ENCODE measurements at regions of chrX and their contacts with region 1.

Region 1: DNA sequence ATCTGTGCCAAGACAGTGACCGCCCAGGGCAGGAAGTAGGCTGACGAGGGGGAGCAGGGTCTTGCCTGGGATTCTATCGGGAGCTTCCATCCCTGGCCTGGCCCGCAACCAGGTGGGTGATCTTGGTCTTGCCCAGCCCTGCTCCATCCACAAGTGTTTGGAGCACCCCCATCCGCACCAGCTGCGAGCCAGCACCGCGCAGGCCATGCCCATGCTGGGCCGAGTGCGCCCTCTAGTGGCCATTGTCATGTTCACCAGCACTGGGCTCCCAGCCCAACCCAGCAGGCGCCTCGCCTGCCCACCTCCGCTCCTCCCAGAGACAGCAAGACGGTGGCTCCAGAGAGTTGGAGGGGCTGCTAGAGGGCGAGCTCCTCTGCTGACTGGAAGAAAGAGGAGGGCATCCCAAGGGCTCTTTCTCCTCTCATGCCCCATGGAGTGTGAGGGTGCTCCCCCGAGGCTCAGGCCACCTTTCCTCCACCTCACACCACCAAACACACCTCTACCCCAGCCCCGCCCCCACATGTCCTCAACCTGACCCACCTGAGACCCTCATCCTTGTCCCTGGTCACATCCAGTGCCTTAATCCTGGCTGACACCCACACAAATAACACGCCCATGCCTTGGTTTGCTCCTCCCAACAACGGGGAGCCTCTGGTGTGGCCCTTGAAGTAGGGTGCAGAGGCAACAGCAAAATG is 9.8 kb upstream of the ATP2B3 start:
- DNase-seq: peak; percentile 69 to 88
- ATAC-seq: peak; percentile 88 to 98
- H3K4me3 ChIP-seq: no peak overlapping the region
- H3K27ac ChIP-seq: peak overlapping the region in 1 of 2 experiments; percentile 48; a peak in 1 of 6 replicates
- H3K4me1 ChIP-seq: no peaks in the 10 kb centered on the region
- CTCF ChIP-seq: peak; percentile 84
- EP300 ChIP-seq: no peak
- POLR2A ChIP-seq: no peak
- RAD21 ChIP-seq: peak; percentile 88 to 89

Region 2: DNA sequence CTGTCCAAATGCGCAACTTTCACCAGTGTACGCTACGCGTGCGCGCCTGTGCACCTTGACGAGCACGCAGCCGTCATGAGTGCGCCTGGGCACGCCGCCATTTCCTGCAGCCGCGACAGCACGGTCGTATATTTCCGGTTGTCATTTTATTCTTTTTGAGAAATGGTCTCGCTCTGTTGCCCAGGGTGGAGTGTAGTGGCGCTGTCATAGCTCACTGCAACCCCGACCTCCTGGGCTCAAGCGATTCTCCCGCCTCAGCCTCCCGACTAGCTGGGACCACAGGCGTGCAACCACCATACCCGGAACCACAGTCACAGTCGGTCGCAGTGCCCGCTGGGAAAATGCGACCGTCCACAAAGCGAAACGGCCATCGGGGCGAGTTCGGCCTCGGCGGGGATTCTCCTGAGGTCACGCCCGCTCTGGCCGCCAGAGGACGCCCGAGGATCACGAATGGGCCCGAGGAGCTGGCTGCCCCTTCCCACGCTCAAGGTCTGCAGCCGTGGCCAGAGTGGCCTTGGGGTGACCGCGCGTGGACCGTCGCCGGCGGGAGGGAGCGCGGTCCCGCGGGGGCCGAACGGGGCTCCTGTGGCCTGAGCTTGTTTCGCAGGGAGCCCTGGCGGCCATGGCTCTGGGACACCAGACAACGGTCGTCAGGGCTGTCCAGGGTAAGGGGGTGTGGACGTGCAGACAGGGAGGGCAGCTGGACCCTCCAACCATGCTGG is 475.1 kb before region 1 on chrX:
- CTCF ChIA-PET with region 1: interaction called, 32 read pairs
- POLR2A ChIA-PET with region 1: no interaction called
- DNase-seq: peak; percentile 55 to 77
- ATAC-seq: peak; percentile 80 to 90
- H3K4me3 ChIP-seq: peak overlapping the region; percentile 34; the same call in 2 of the 3 replicates
- H3K27ac ChIP-seq: peak overlapping the region in 1 of 2 experiments; percentile 44; a peak in 2 of 6 replicates
- H3K4me1 ChIP-seq: no peaks in the 10 kb centered on the region
- CTCF ChIP-seq: peak; percentile 80
- EP300 ChIP-seq: no peak
- POLR2A ChIP-seq: no peak
- RAD21 ChIP-seq: peak; percentile 88 to 97

Region 3: DNA sequence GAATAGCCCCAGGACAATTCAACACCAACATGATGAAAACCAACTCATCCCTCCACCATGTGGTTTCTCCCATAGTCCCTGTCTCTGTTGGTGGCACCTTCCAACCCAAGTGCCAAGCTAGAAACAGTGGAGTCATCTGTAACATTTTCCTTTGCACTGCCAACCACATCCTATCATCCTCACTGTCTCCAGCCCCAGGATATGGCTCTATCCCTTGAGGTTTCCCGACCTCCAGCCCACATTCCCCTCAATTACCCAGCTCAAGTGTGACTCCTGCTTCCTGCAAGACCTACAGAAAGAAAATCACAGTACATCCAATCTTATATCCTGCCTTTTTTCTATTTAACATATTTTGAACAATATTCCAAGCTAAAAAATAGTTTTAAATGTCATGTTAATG is 210.3 kb before region 1 on chrX:
- CTCF ChIA-PET with region 1: no interaction called
- POLR2A ChIA-PET with region 1: no interaction called
- DNase-seq: no peak
- ATAC-seq: no peak
- H3K4me3 ChIP-seq: no peak overlapping the region
- H3K27ac ChIP-seq: no peak overlapping the region
- H3K4me1 ChIP-seq: no peaks in the 10 kb centered on the region
- CTCF ChIP-seq: no peak
- EP300 ChIP-seq: no peak
- POLR2A ChIP-seq: no peak
- RAD21 ChIP-seq: no peak

Region 4: DNA sequence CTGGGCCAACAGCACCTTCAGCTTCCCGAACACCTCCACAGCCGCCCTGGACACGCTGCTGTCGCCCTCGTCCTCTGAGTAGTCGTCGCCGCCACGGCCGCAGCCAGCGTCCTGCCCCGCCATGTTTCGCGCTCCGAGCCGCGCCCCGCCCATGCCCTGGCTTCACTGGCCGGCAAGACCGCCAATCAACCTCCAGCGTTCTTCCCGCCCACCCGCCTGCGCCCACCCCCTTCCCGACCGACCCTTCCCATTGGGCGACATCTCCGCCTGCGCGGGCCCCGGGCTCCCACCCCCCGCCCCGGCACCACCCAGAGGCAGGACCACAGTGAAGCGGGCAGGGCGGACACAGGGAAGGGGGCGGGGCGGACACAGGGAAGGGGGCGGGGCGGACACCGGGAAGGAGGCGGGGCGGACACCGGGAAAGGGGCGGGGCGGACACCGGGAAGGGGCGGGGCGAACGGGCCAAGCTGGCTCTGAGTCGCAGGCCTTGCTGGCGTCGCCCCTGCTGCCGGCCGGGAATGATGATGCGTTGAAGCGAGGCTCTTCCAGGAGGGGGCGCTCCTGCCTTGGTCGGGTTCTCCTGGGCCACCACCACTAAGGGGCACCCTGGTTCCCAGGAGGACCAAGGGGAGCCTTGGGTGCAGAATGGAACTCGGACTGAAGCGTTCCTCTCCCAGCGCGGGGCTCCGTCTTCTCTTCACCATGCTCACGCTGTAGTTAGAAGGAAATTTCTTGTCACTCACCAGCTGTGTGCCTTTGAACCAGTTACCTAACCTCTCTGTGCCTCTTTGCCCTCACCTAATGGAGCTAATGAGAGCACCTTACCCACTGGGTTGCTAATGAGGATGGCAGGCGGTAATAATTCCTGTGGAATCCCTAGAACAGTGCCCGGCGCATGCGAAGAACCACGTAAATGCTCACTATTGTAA is 36.9 kb before region 1 on chrX and contains the start of gene HAUS7:
- CTCF ChIA-PET with region 1: interaction called, 130 read pairs
- POLR2A ChIA-PET with region 1: interaction called, 3 read pairs
- DNase-seq: peak; percentile 85 to 93
- ATAC-seq: peak; percentile 87 to 90
- H3K4me3 ChIP-seq: peak within 1 kb of the TSS; percentile 75
- H3K27ac ChIP-seq: peak within 1 kb of the TSS; percentile 64 to 90
- H3K4me1 ChIP-seq: peaks cover 3% of the 10 kb centered on the region; the same call in 1 of the 3 replicates
- CTCF ChIP-seq: peak; percentile 77
- EP300 ChIP-seq: no peak
- POLR2A ChIP-seq: peak; percentile 60
- RAD21 ChIP-seq: peak; percentile 57 to 63
- polyA plus RNA-seq, gene HAUS7: 30.3 and 39.1 TPM in 2 replicates

Region 5: GRCh38 chrX:153494541-153495361 is 12.9 kb before region 1 on chrX and contains the start of gene BGN:
- CTCF ChIA-PET with region 1: interaction called, 36 read pairs
- POLR2A ChIA-PET with region 1: no interaction called
- DNase-seq: peak in 1 of 2 experiments; percentile 15
- ATAC-seq: peak in 1 of 2 experiments; percentile 64; a peak in 3 of 6 replicates
- H3K4me3 ChIP-seq: no peak within 1 kb of the TSS
- H3K27ac ChIP-seq: no peak within 1 kb of the TSS
- H3K4me1 ChIP-seq: no peaks in the 10 kb centered on the region
- CTCF ChIP-seq: no peak
- EP300 ChIP-seq: no peak
- POLR2A ChIP-seq: no peak
- RAD21 ChIP-seq: no peak; a peak in 1 of 5 replicates
- polyA plus RNA-seq, gene BGN: not detected in 2 replicates